ENCODE measurements at regions of chr12 and their contacts with region 1.

Region 1: GRCh38 chr12:12654691-12655460 is 41.1 kb downstream of the GPR19 start:
- DNase-seq: no peak
- ATAC-seq: no peak
- H3K4me3 ChIP-seq: no peak overlapping the region
- H3K27ac ChIP-seq: no peak overlapping the region
- H3K4me1 ChIP-seq: no peaks in the 10 kb centered on the region
- H3K27me3 ChIP-seq: no peaks in the 10 kb centered on the region

Region 2: DNA sequence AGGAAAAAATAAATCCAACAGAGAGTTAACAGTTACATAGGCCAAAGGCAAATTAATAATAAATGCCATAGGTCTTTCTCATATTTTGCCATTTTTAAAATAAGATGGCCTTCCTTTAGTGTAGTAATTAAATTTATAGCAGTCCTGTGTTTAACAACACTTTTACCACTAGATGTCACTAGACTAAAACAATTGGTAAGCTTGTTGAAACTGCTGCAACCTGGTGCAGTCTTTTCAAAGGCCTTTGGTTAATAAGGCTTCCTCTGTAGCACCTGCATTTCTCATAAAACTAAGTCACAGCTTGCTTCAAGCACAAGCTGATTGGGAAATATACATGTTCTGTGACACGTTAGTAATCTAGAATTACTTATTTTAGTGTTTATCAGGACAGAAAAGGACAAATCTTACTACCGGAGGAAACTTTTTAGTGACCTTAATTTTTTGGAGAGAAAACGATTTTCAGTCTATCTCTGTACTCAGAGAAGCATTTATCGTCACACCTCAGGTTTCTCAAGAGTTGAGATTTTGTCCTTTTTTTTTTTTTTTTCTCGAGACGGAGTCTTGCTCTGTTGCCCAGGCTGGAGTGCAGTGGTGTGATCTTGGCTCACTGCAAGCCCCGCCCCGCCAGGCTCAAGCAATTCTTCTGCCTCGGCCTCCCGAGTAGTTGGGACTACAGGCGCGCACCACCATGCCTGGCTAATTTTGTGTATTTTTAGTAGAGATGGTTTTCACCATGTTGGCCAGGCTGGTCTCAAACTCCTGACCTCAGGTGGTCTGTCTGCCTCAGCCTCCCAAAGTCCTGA is 278.0 kb before region 1 on chr12:
- intact Hi-C with region 1: loop called (anchors 5 kb)
- DNase-seq: no peak
- ATAC-seq: peak; percentile 89
- H3K4me3 ChIP-seq: no peak overlapping the region
- H3K27ac ChIP-seq: no peak overlapping the region
- H3K4me1 ChIP-seq: peaks cover 0 to 1% of the 10 kb centered on the region in 2 donors
- H3K27me3 ChIP-seq: no peaks in the 10 kb centered on the region

Region 3: GRCh38 chr12:12449467-12450025 is 205.3 kb before region 1 on chr12:
- intact Hi-C with region 1: no loop called
- DNase-seq: no peak
- ATAC-seq: peak; percentile 75
- H3K4me3 ChIP-seq: no peak overlapping the region
- H3K27ac ChIP-seq: no peak overlapping the region
- H3K4me1 ChIP-seq: no peaks in the 10 kb centered on the region
- H3K27me3 ChIP-seq: no peaks in the 10 kb centered on the region